ENCODE measurements at regions of chr5 and their contacts with region 1.

Region 1: GRCh38 chr5:58188262-58188651 is 271.6 kb downstream of the PLK2 start:
- DNase-seq: no peak
- ATAC-seq: peak in 5 of 8 donors; percentile 34 to 73 (median 47)
- H3K4me3 ChIP-seq: no peak overlapping the region
- H3K27ac ChIP-seq: peak overlapping the region in 4 of 10 donors; percentile 3 to 33 (median 16)
- H3K4me1 ChIP-seq: peaks cover 0 to 27% (median 12%) of the 10 kb centered on the region in 9 donors
- H3K27me3 ChIP-seq: no peaks in the 10 kb centered on the region
- CTCF ChIP-seq: peak in 5 of 9 donors; percentile 7 to 35 (median 18)

Region 2: DNA sequence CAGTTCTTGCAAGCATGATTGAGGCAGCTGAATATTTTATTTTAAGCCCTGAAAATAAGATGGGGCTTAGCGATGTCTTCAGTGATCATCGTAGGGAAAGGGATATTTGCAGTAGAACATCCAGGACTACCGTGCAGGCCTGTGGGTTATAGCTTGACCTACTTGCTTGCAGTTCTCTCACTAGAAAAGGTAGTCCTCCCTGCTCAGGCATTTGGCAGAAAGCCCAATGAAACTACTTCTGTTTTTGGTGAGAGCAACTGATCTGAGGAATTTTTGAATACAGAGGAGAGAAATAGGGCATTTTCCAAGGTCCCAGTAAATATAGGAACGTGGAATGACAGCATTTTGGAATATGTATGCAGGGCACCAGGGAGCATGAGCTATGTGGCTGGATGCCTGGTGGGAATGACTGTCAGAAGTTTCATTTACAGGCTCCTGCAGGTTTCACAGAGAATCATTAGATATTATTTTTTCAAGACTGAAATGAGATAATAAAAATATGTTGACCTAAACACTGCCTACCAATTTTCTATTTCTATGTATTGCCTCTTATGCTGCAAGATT is 287.8 kb before region 1 on chr5:
- intact Hi-C with region 1: loop called in 1 of 10 experiments (anchors 10 kb)
- DNase-seq: no peak
- ATAC-seq: no peak
- H3K4me3 ChIP-seq: no peak overlapping the region
- H3K27ac ChIP-seq: no peak overlapping the region
- H3K4me1 ChIP-seq: peaks cover 0 to 29% (median 5%) of the 10 kb centered on the region in 9 donors
- H3K27me3 ChIP-seq: no peaks in the 10 kb centered on the region
- CTCF ChIP-seq: no peak

Region 3: GRCh38 chr5:58240286-58240685 is 52.0 kb after region 1 on chr5:
- intact Hi-C with region 1: loop called in 2 of 10 experiments (anchors 5 to 10 kb)
- DNase-seq: no peak
- ATAC-seq: no peak
- H3K4me3 ChIP-seq: no peak overlapping the region
- H3K27ac ChIP-seq: peak overlapping the region in 8 of 10 donors; percentile 12 to 91 (median 68)
- H3K4me1 ChIP-seq: peaks cover 0 to 47% (median 9%) of the 10 kb centered on the region in 9 donors
- H3K27me3 ChIP-seq: no peaks in the 10 kb centered on the region
- CTCF ChIP-seq: no peak

Region 4: DNA sequence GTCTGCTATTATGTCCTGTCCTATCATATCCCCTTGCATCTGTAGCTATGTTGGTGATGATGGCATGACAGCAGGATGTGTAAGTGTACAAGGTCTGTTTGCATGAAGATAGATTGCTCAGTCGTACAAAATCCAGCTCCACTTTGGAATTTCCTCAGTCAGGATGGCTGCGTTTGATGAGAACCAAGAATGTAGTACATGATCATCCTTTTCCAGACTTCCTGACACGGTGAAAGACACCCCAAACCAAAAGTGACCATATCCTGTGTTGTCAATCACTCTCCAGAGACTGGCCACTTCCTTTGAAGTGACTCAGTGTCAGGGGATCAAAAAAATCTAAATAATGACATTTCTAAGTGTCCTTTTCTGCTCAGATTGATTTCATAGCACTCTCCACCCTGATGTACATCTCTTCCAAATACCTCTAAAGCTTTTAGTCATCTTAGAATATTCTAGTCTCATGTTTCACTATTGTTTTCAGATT is 58.2 kb after region 1 on chr5:
- intact Hi-C with region 1: loop called in 2 of 10 experiments (anchors 5 to 10 kb)
- DNase-seq: no peak
- ATAC-seq: peak in 4 of 8 donors; percentile 46 to 72 (median 57)
- H3K4me3 ChIP-seq: no peak overlapping the region
- H3K27ac ChIP-seq: peak overlapping the region in 9 of 10 donors; percentile 24 to 91 (median 57)
- H3K4me1 ChIP-seq: peaks cover 0 to 65% (median 13%) of the 10 kb centered on the region in 9 donors
- H3K27me3 ChIP-seq: no peaks in the 10 kb centered on the region
- CTCF ChIP-seq: no peak

Region 5: DNA sequence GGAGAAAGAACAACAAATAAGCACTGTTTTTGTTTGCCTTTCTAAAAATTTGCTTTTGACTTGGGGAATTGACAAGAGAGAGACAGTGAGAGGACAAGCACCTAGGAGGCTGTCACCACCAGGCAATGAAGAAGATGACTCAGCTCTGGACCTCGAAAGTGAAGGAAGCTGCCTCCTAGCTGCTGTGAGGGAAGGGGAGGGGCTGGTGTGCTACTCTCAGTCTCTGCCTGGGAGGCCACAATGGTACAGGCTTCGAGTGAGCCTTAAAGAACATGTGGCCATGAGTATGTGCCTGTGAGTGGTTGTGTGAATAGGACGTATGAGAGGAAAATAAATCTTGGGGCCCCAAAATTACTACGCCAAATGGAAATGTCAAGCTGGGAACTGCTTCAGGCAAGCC is 278.7 kb after region 1 on chr5:
- intact Hi-C with region 1: no loop called
- DNase-seq: no peak
- ATAC-seq: peak in 2 of 8 donors; percentile 28 to 38
- H3K4me3 ChIP-seq: no peak overlapping the region
- H3K27ac ChIP-seq: no peak overlapping the region
- H3K4me1 ChIP-seq: peaks cover 0 to 6% (median 5%) of the 10 kb centered on the region in 9 donors
- H3K27me3 ChIP-seq: no peaks in the 10 kb centered on the region
- CTCF ChIP-seq: no peak